Activated CD8-positive, alpha-beta memory T cell treated with anti-CD3 and anti-CD28 coated beads, Interleukin-2, amount 10 ng/mL, durations not matched to agents 7 days and 5 days (primary cell): ENCODE measurements at regions of chr3 and their contacts with region 1.

Region 1: GRCh38 chr3:129934234-129935123 is 40.0 kb upstream of the TRH start:
- DNase-seq: no peak
- ATAC-seq: no peak
- H3K4me3 Mint-ChIP-seq: no peak overlapping the region
- H3K27ac Mint-ChIP-seq: no peak overlapping the region
- H3K4me1 Mint-ChIP-seq: peaks cover 7% of the 10 kb centered on the region
- H3K27me3 Mint-ChIP-seq: peaks cover 10% of the 10 kb centered on the region

Region 2: GRCh38 chr3:129831503-129831902 is 103.0 kb before region 1 on chr3:
- CTCF ChIA-PET with region 1: interaction called, 10 read pairs
- DNase-seq: no peak
- ATAC-seq: no peak
- H3K4me3 Mint-ChIP-seq: no peak overlapping the region
- H3K27ac Mint-ChIP-seq: no peak overlapping the region
- H3K4me1 Mint-ChIP-seq: peaks cover 16% of the 10 kb centered on the region
- H3K27me3 Mint-ChIP-seq: no peaks in the 10 kb centered on the region

Region 3: DNA sequence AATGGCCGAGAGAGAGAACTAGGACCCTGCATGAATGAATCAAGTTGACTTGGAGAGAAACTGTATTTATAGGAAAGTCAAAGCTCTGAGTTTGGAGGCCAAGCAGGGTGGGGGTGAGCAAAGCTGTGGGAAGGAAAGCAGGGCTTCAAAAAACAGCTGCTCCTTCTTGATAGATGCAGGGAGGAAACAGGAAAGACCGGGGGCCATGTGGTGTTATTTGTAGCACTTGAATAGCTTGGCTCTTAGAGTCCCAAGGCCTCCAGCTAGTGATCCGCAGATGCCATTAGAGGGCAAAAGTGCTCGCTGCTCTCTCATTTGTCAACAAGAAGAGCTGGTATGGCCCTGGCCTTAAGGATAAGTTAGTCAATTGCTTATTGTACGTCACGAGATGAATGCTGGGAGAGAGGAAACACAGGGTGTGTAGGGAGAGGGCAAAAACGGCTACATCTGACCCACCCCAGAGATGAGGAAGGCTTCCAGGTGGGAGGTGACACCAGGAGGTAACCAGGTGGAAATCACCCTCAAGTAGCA is 146.9 kb after region 1 on chr3 and contains the start of gene ALG1L2:
- CTCF ChIA-PET with region 1: no interaction called
- DNase-seq: no peak
- ATAC-seq: no peak
- H3K4me3 Mint-ChIP-seq: no peak within 1 kb of the TSS
- H3K27ac Mint-ChIP-seq: no peak within 1 kb of the TSS
- H3K4me1 Mint-ChIP-seq: peaks cover 5% of the 10 kb centered on the region
- H3K27me3 Mint-ChIP-seq: peaks cover 23% of the 10 kb centered on the region
- total RNA-seq, gene ALG1L2: 0.66 to 1.4 TPM

Region 4: GRCh38 chr3:130111185-130111864 is 176.8 kb after region 1 on chr3:
- CTCF ChIA-PET with region 1: no interaction called
- DNase-seq: peak; percentile 99
- ATAC-seq: peak; percentile 100
- H3K4me3 Mint-ChIP-seq: peak overlapping the region; percentile 91
- H3K27ac Mint-ChIP-seq: peak overlapping the region; percentile 100
- H3K4me1 Mint-ChIP-seq: peaks cover 25% of the 10 kb centered on the region
- H3K27me3 Mint-ChIP-seq: no peaks in the 10 kb centered on the region